ENCODE measurements at regions of chr5 and their contacts with region 1.

Region 1: GRCh38 chr5:86880785-86881492 is 263.2 kb downstream of the COX7C start:
- DNase-seq: peak in 5 of 10 donors; percentile 46 to 87 (median 54)

Region 2: GRCh38 chr5:86968301-86968753 is 87.4 kb after region 1 on chr5:
- intact Hi-C with region 1: loop called (anchors 1 kb)
- DNase-seq: peak in 7 of 10 donors; percentile 8 to 77 (median 26)

Region 3: GRCh38 chr5:87008751-87009560 is 128.0 kb after region 1 on chr5:
- intact Hi-C with region 1: loop called (anchors 1 kb)
- DNase-seq: no peak

Region 4: DNA sequence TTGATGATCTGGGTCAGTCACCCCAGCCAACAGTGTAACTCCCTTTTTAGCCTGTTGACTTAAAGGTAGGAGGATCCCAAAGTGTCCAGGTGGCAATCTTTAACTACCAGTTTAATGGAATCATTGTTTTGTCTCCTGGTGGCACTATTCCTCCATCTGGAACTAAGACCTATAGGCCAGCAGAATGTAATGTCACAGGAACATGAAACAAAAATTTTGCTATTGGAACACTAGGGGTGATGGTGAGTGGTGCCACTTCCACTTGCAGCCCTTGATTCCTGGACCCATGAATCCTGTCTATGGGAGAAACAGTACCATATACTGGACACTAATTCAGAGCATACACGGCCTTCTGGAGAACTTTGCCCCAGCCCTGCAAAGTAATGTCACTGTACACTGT is 167.2 kb after region 1 on chr5:
- intact Hi-C with region 1: no loop called
- DNase-seq: no peak

Measured in posterior cingulate gyrus (tissue), 11 donors.